ENCODE measurements at regions of chr4 and their contacts with region 1.

Region 1: GRCh38 chr4:83284193-83285054 is at the start of gene COQ2:
- DNase-seq: peak; percentile 90 to 97 (median 95)
- ATAC-seq: peak; percentile 89
- H3K4me3 ChIP-seq: peak within 1 kb of the TSS; percentile 56 to 78
- H3K4me3 Mint-ChIP-seq: peak within 1 kb of the TSS; percentile 97
- H3K27ac ChIP-seq: peak within 1 kb of the TSS; percentile 71 to 84
- H3K27ac Mint-ChIP-seq: peak within 1 kb of the TSS; percentile 98
- H3K4me1 ChIP-seq: peaks cover 17% of the 10 kb centered on the region
- H3K4me1 Mint-ChIP-seq: peaks cover 35% of the 10 kb centered on the region
- H3K27me3 ChIP-seq: no peaks in the 10 kb centered on the region
- H3K27me3 Mint-ChIP-seq: no peaks in the 10 kb centered on the region
- CTCF ChIP-seq: no peak
- total RNA-seq, gene COQ2: 9.0 to 9.8 TPM

Region 2: DNA sequence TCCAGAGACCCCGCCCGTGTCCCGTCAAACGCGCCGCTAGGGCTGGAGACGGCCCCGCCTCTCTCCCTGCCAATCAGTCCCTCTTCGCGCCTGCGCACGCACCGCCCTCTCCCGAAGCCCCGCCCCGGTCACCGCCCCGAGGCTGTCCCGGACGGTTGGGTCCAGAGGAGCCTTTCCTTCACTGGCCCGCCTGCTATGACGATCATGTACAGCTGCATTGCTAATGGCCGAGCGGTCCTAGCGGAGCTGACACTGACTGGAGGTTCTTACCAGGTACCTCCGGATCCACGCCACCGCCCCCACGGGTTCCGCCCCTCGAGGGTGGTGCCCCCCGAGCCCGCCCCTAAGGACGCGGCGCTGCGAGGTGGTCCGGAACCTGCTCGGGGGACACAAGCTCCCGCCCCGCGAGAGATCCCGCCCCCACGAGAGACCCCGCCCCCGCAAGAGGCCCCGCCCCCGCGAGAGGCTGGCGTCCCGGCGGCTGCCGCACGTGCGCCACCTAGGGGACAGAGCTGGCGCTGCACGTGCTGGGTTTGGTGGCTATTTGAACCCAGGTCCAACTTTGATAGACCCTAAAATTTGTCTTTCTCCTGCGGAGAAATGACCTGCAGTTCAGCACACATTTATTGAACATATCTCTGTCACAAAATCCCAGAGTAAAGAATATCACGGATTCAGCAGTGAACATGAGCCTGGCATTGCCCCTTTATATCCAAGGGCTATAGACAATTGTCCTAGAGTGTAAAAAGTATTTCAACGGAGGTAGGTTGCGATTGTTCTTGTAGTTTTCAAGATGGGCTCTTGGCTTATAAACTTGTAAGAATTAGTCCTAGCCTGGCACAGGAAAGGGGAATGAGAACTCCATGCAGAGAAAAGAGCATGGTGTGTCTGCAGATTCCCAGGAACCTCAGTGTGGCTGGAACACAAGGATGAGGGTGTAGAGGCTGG is 999.3 kb before region 1 on chr4:
- CTCF ChIA-PET with region 1: no interaction called
- POLR2A ChIA-PET with region 1: no interaction called
- intact Hi-C with region 1: loop called in 1 of 2 experiments (anchors 10 kb)
- DNase-seq: peak; percentile 98 to 99 (median 99)
- ATAC-seq: peak; percentile 91
- H3K4me3 ChIP-seq: peak overlapping the region; percentile 57 to 63
- H3K4me3 Mint-ChIP-seq: peak overlapping the region; percentile 88
- H3K27ac ChIP-seq: peak overlapping the region; percentile 43 to 68
- H3K27ac Mint-ChIP-seq: peak overlapping the region; percentile 41
- H3K4me1 ChIP-seq: peaks cover 12% of the 10 kb centered on the region
- H3K4me1 Mint-ChIP-seq: peaks cover 15% of the 10 kb centered on the region
- H3K27me3 ChIP-seq: peaks cover 0 to 5% of the 10 kb centered on the region in 2 experiments
- H3K27me3 Mint-ChIP-seq: no peaks in the 10 kb centered on the region
- CTCF ChIP-seq: peak; percentile 97

Region 3: GRCh38 chr4:82428969-82429727 is 855.3 kb before region 1 on chr4:
- CTCF ChIA-PET with region 1: no interaction called
- POLR2A ChIA-PET with region 1: interaction called, 4 read pairs
- intact Hi-C with region 1: loop called in 1 of 2 experiments (anchors 10 kb)
- DNase-seq: peak; percentile 87 to 96 (median 93)
- ATAC-seq: peak; percentile 62
- H3K4me3 ChIP-seq: peak overlapping the region; percentile 91 to 99
- H3K4me3 Mint-ChIP-seq: peak overlapping the region; percentile 100
- H3K27ac ChIP-seq: peak overlapping the region; percentile 99 to 100
- H3K27ac Mint-ChIP-seq: peak overlapping the region; percentile 99
- H3K4me1 ChIP-seq: peaks cover 40% of the 10 kb centered on the region
- H3K4me1 Mint-ChIP-seq: peaks cover 72% of the 10 kb centered on the region
- H3K27me3 ChIP-seq: no peaks in the 10 kb centered on the region
- H3K27me3 Mint-ChIP-seq: no peaks in the 10 kb centered on the region
- CTCF ChIP-seq: peak; percentile 90

Region 4: DNA sequence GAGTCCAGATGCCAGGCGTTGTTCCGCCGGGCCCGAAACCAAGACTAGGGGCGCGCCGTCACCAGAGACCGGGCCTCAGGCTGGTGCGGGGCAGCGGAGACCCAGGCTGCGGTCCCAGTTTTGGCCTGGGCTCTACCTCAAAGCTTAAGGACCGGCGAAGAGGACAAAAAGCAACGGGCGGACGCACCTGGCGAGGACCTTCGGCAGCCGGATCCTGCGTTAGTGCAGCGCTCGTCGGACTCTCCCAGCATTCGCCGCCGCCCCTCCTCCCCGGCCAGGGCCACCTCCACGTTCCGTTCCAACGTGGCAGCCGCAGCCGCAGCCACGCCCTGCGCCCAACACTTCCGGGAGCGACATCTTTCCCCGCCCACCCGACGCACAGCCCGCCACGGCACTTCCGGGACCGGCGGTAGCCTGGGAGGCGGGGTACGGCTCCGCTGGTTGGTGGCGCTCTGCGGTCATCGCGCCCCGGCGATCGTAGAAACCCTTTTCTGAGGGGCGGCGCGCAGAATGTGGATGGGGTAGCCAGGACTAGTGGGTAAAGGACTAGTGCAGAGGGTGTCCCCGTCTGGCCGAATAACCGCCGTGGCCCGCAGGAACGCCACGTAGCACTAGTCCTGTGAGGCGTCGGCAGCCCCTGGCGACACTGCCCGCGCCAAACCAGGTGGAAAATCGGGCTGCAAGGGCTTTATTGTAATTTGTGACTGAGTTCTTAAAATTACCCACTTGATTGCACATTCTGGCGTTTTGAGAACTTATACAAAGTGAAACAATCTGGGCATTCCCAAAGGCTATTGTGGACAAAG is 393.3 kb before region 1 on chr4 and contains the start of gene SEC31A:
- CTCF ChIA-PET with region 1: no interaction called
- POLR2A ChIA-PET with region 1: no interaction called
- intact Hi-C with region 1: loop called in 1 of 2 experiments (anchors 1 kb)
- DNase-seq: peak; percentile 93 to 99 (median 97)
- ATAC-seq: peak; percentile 93
- H3K4me3 ChIP-seq: peak within 1 kb of the TSS; percentile 87 to 88
- H3K4me3 Mint-ChIP-seq: peak within 1 kb of the TSS; percentile 89
- H3K27ac ChIP-seq: peak within 1 kb of the TSS; percentile 96
- H3K27ac Mint-ChIP-seq: peak within 1 kb of the TSS; percentile 98
- H3K4me1 ChIP-seq: peaks cover 22% of the 10 kb centered on the region
- H3K4me1 Mint-ChIP-seq: peaks cover 45% of the 10 kb centered on the region
- H3K27me3 ChIP-seq: no peaks in the 10 kb centered on the region
- H3K27me3 Mint-ChIP-seq: no peaks in the 10 kb centered on the region
- CTCF ChIP-seq: no peak
- total RNA-seq, gene SEC31A: 115 to 117 TPM

Region 5: DNA sequence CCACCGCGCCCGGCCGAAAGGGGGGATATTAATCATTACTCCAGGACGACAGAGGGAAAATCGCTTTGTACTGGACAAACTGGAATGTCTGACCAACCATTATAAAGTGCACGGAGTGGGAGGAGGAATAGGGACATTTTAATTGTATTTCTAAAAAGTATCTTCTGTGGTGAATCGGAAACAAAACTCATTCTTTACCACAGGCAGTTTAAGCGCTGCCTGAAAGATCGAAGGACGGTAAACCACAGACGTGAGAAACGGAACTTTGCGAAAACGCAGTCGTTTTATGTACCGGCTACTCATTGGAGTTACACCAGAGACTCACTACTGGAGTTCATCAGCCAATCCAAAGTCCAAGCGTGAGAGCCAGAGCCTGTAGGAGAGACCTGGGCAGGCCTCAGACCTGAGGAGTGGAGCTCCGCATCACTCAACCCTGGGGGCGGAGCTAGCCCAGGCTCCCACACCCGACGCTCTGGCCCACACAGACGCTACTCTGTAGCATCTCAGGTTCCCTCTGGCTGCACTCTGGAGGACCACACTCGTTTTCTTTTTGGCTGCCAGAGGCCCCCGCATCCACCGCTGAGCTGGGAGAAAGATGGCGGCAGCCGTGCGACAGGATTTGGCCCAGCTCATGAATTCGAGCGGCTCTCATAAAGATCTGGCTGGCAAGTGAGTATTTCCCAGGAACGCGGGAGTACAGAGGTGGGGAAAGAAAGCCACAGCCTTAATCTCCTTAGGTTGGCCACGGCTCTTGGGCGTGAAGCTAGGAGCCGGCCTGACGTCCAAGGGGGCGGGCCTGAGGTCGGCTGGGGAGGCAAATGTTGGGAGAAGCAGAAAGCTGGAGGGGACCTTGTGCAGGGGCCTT is 249.6 kb before region 1 on chr4 and contains the start of gene COPS4:
- CTCF ChIA-PET with region 1: interaction called, 6 read pairs
- POLR2A ChIA-PET with region 1: interaction called, 6 read pairs
- intact Hi-C with region 1: loop called in 1 of 2 experiments (anchors 1 kb)
- DNase-seq: peak; percentile 87 to 100 (median 94)
- ATAC-seq: peak; percentile 98
- H3K4me3 ChIP-seq: peak within 1 kb of the TSS; percentile 73 to 90
- H3K4me3 Mint-ChIP-seq: peak within 1 kb of the TSS; percentile 99
- H3K27ac ChIP-seq: peak within 1 kb of the TSS; percentile 76 to 92
- H3K27ac Mint-ChIP-seq: peak within 1 kb of the TSS; percentile 99
- H3K4me1 ChIP-seq: peaks cover 16% of the 10 kb centered on the region
- H3K4me1 Mint-ChIP-seq: peaks cover 41% of the 10 kb centered on the region
- H3K27me3 ChIP-seq: no peaks in the 10 kb centered on the region
- H3K27me3 Mint-ChIP-seq: no peaks in the 10 kb centered on the region
- CTCF ChIP-seq: peak; percentile 51
- total RNA-seq, gene COPS4: 32.2 to 35.2 TPM

Region 6: GRCh38 chr4:83083925-83084475 is 200.4 kb before region 1 on chr4:
- CTCF ChIA-PET with region 1: interaction called, 13 read pairs
- POLR2A ChIA-PET with region 1: interaction called, 3 read pairs
- intact Hi-C with region 1: no loop called
- DNase-seq: peak; percentile 44 to 91 (median 61)
- ATAC-seq: peak; percentile 98
- H3K4me3 ChIP-seq: no peak overlapping the region
- H3K4me3 Mint-ChIP-seq: peak overlapping the region; percentile 47
- H3K27ac ChIP-seq: peak overlapping the region; percentile 67 to 81
- H3K27ac Mint-ChIP-seq: peak overlapping the region; percentile 97
- H3K4me1 ChIP-seq: peaks cover 29% of the 10 kb centered on the region
- H3K4me1 Mint-ChIP-seq: peaks cover 39% of the 10 kb centered on the region
- H3K27me3 ChIP-seq: no peaks in the 10 kb centered on the region
- H3K27me3 Mint-ChIP-seq: no peaks in the 10 kb centered on the region
- CTCF ChIP-seq: peak; percentile 65

Region 7: DNA sequence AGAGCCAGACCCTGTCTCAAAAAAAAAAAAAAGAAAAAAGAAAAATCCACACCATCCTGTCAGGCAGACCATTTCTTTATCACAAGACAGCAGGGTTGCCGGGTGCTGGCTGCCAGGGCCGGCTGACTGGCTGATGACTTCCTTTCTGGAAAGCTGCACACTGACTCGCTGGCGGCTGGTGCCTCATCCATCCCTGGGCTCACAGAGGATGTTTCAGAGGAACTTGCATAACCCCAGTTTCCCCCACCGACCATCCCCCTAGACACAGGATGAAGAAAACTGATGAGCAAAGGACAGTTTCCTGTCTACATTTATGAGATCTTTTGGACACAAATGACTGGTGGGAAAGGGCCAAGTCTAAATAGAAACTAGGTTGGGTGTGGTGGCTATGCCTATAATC is 36.1 kb after region 1 on chr4:
- CTCF ChIA-PET with region 1: no interaction called
- POLR2A ChIA-PET with region 1: no interaction called
- intact Hi-C with region 1: no loop called
- DNase-seq: peak in 1 of 9 experiments; percentile 35
- ATAC-seq: no peak
- H3K4me3 ChIP-seq: no peak overlapping the region
- H3K4me3 Mint-ChIP-seq: no peak overlapping the region
- H3K27ac ChIP-seq: no peak overlapping the region
- H3K27ac Mint-ChIP-seq: no peak overlapping the region
- H3K4me1 ChIP-seq: peaks cover 6% of the 10 kb centered on the region
- H3K4me1 Mint-ChIP-seq: peaks cover 6% of the 10 kb centered on the region
- H3K27me3 ChIP-seq: no peaks in the 10 kb centered on the region
- H3K27me3 Mint-ChIP-seq: no peaks in the 10 kb centered on the region
- CTCF ChIP-seq: no peak

Region 8: DNA sequence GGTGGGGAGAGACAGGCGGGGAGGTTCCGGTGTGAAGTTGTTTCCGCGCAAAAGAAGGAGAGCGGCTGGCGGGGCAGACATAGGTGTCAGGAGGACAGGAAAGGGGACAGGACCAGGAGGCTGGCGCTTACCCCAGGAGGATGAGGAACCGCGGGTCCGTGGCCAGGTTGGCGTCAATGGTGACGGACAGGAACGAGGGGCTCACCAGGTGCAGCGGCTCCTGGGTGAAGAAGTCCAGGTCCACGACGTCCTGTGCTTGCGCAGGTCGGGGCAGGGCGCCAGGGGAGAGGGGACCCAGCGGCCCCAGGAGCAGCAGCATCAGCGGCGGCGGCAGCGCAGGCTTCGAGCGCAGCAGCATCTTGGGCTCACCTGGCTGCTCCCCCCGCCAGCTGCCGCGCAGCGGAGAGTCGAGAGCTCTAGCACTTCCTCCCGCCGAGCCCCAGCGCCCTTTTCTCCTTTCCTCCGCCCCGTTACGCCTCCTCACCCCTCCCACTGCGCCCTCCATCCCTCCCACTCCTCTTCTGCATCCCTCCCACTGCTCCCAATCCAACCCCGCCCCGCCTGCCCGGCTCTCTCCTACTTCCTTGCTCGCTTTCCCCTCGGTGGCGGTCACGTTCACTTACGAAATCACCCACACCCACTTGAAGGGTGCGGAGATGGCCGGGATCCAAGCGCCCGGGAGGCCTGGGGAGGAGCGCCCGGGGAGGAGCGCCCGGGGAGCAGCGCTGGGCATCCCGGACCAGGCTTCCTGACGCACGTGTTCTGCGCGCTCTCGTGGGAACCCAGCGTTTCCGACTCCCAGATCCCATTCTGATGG is 50.2 kb after region 1 on chr4 and contains the start of gene HPSE:
- CTCF ChIA-PET with region 1: interaction called, 4 read pairs
- POLR2A ChIA-PET with region 1: no interaction called
- intact Hi-C with region 1: loop called in 1 of 2 experiments (anchors 1 kb)
- DNase-seq: peak; percentile 35 to 82 (median 71)
- ATAC-seq: peak; percentile 94
- H3K4me3 ChIP-seq: peak within 1 kb of the TSS; percentile 73 to 79
- H3K4me3 Mint-ChIP-seq: peak within 1 kb of the TSS; percentile 90
- H3K27ac ChIP-seq: peak within 1 kb of the TSS; percentile 48 to 70
- H3K27ac Mint-ChIP-seq: peak within 1 kb of the TSS; percentile 82
- H3K4me1 ChIP-seq: peaks cover 11% of the 10 kb centered on the region
- H3K4me1 Mint-ChIP-seq: peaks cover 31% of the 10 kb centered on the region
- H3K27me3 ChIP-seq: peaks cover 0 to 4% of the 10 kb centered on the region in 2 experiments
- H3K27me3 Mint-ChIP-seq: peaks cover 5% of the 10 kb centered on the region
- CTCF ChIP-seq: no peak
- total RNA-seq, gene HPSE: 1.1 to 1.3 TPM